Transverse colon (tissue), 4 donors: ENCODE measurements at regions of chr15 and their contacts with region 1.

Region 1: DNA sequence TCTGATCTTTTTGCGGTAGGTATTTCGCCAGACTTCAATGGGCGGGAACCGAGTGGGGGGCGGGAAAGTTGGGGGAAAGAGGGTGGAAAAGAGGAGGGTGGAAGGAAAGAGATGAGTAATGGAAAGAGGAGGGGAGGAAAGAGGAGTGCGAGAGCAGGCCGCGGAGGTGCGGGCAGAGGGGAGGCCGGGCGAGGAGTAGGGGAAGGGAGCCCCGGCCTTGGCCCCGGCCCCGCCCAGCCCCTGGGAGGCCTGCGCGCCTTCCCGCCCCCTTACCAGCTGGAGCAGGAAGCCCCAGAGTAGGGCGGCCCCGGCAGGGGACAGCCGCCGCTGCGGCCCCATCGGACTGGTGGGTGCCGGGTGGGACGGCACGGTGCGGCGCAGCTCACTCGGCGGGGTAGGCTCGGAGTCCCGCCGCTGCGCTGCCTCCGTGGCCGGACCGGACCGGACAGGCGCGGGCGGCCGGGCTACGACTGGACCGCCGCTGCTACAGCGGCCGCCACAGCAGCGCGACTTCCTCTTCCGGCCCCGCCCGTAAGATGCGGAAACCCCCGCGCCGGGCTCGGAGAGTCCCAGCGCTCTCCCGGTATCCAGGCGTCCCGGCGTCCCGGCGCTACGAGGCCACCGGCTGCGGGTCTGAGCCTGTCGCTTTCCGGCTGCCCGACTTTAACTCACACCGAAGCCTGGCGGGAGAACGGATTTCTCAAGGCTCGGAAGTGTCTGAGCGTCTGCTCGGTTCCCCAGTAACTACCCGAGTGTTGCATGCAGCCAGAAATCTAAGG is at the start of gene SPPL2A:
- DNase-seq: peak; percentile 86
- H3K4me3 ChIP-seq: peak within 1 kb of the TSS; percentile 69 to 99 (median 94)
- H3K27ac ChIP-seq: peak within 1 kb of the TSS; percentile 95 to 99 (median 98)
- H3K4me1 ChIP-seq: peaks cover 10 to 50% (median 28%) of the 10 kb centered on the region in 4 donors
- H3K27me3 ChIP-seq: no peaks in the 10 kb centered on the region
- CTCF ChIP-seq: no peak
- EP300 ChIP-seq: no peak
- POLR2A ChIP-seq: peak; percentile 93
- total RNA-seq, gene SPPL2A: 325 to 777 (median 391) TPM

Region 2: DNA sequence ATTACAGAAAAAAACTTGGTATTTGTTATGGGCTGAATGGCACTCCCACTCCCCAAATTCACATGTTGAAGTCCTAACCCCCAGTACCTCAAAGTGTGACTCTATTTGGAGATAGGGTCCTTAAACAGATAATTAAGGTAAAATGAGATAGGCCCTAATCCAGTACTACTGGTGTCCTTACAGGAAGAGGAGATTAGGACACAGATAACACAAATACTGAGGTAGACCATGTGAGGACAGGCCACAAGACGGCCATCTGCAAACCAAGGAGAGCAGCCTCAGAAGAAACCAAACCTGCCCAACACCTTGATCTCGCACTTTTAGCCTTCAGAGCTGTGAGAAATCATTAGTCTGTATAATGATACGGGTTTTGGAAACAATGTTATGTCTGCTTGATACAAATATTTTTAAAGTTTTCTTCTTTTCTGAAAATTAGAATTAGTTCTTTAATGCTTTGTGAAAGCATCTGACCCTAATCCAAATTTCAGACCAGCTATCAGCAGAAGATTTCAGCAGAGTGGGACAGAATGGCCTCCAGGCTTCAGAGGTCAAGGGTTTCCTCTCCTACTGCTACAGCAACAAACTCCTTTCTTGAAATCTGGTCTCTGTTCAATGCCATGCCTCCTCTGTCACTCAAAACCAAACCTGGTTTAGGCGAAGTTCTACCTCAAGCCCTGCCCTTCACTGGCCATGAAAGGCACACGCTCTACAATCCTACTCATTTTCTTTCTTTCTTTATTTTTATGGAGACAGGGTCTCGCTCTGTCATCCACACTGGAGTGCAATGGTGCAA is 477.9 kb before region 1 on chr15:
- in situ Hi-C with region 1: no loop called
- intact Hi-C with region 1: no loop called
- DNase-seq: no peak
- H3K4me3 ChIP-seq: no peak overlapping the region
- H3K27ac ChIP-seq: no peak overlapping the region
- H3K4me1 ChIP-seq: no peaks in the 10 kb centered on the region
- H3K27me3 ChIP-seq: no peaks in the 10 kb centered on the region
- CTCF ChIP-seq: no peak
- EP300 ChIP-seq: no peak
- POLR2A ChIP-seq: no peak

Region 3: DNA sequence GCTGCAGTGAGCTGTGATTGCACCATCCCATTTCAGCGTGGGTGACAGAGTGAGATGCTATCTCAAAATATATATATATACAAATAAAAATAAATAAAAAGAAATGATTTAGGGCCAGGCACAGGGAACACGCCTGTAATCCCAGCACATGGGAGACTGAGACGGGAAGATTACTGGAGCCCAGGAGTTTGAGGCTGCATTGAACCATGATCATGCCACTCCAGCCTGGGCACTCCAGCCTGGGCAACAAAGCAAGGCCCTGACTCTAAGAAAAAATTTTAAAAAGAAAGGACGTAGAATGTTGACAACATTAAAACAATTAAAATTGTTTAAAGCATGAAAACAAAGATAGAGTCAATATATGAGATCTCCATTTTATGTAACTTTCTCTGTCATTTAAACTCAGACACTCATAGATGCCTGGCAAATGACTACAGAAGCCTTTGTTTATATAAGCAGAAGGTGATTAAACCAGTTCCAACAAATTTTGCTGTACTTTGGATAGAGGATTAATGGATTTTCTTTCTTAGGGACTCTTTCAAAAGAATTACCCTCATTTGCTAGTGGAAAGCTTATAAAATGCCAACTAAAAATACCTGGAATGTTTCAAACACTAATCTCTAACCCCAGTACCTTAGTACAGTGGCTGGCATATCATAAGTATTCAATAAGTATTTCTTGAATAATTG is 68.1 kb before region 1 on chr15:
- in situ Hi-C with region 1: no loop called
- intact Hi-C with region 1: loop called (anchors 10 kb)
- DNase-seq: no peak
- H3K4me3 ChIP-seq: no peak overlapping the region
- H3K27ac ChIP-seq: no peak overlapping the region
- H3K4me1 ChIP-seq: no peaks in the 10 kb centered on the region
- H3K27me3 ChIP-seq: no peaks in the 10 kb centered on the region
- CTCF ChIP-seq: no peak
- EP300 ChIP-seq: no peak
- POLR2A ChIP-seq: no peak

Region 4: GRCh38 chr15:51536965-51537574 is 771.7 kb after region 1 on chr15:
- in situ Hi-C with region 1: no loop called
- intact Hi-C with region 1: no loop called
- DNase-seq: no peak
- H3K4me3 ChIP-seq: no peak overlapping the region
- H3K27ac ChIP-seq: no peak overlapping the region
- H3K4me1 ChIP-seq: no peaks in the 10 kb centered on the region
- H3K27me3 ChIP-seq: no peaks in the 10 kb centered on the region
- CTCF ChIP-seq: peak; percentile 41 to 53 (median 43)
- EP300 ChIP-seq: no peak
- POLR2A ChIP-seq: no peak

Region 5: DNA sequence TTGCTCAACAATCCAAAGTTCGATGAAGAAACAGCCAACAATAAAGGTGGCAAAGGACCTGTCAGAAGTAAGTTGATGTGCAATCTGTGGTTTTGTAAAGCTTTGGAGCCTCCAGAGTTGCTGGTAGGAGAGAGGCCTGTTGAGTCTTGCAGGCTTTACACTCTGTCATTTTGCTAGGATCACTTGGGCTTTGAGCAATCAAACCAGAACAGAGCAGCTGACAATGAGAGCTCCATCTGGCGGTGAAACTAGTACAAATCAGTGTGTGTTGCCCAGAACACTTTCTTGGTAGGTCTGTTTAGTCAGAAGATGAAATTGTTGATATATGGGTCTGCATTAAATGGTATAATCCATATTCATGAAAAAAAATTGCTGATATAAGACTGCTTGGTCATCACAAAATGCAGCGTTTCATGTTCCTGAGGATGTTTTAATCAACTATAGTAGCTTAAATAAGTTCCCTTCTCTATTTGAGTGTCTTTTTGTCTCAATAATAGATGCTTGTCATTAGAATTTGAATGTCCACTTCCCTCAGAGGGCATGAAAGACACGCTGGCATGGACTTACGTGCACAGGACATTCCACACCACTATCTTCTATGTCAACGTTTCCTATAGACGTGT is 1011.7 kb after region 1 on chr15:
- in situ Hi-C with region 1: no loop called
- intact Hi-C with region 1: no loop called
- DNase-seq: peak; percentile 69
- H3K4me3 ChIP-seq: no peak overlapping the region
- H3K27ac ChIP-seq: no peak overlapping the region
- H3K4me1 ChIP-seq: peaks cover 0 to 12% (median 0%) of the 10 kb centered on the region in 4 donors
- H3K27me3 ChIP-seq: no peaks in the 10 kb centered on the region
- CTCF ChIP-seq: peak; percentile 62 to 75 (median 70)
- EP300 ChIP-seq: no peak
- POLR2A ChIP-seq: no peak

Region 6: DNA sequence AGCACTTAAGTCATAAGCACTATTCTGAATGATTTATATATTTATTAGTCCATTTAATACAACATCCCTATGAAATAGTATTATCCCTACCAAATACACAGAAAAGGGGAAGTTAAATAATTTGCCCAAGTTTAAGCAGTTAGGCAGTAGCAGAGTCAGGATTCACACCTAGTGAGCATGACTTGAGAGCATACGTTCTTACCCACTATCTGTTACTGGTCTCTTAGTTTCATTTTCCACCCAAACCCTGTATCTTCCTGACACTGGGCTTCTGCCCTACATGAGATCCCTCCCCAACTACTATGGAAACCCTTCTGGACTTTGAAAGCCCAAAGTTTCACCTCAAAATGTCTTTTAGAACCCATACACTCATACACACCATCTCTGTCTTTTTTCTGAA is 1918.2 kb after region 1 on chr15:
- in situ Hi-C with region 1: no loop called
- intact Hi-C with region 1: no loop called
- DNase-seq: no peak
- H3K4me3 ChIP-seq: no peak overlapping the region
- H3K27ac ChIP-seq: peak overlapping the region in 3 of 4 donors; percentile 4 to 36 (median 12)
- H3K4me1 ChIP-seq: peaks cover 3 to 6% (median 5%) of the 10 kb centered on the region in 4 donors
- H3K27me3 ChIP-seq: no peaks in the 10 kb centered on the region
- CTCF ChIP-seq: no peak
- EP300 ChIP-seq: no peak
- POLR2A ChIP-seq: no peak